Ascending aorta (tissue), 2 donors: ENCODE measurements at regions of chr2 and their contacts with region 1.

Region 1: DNA sequence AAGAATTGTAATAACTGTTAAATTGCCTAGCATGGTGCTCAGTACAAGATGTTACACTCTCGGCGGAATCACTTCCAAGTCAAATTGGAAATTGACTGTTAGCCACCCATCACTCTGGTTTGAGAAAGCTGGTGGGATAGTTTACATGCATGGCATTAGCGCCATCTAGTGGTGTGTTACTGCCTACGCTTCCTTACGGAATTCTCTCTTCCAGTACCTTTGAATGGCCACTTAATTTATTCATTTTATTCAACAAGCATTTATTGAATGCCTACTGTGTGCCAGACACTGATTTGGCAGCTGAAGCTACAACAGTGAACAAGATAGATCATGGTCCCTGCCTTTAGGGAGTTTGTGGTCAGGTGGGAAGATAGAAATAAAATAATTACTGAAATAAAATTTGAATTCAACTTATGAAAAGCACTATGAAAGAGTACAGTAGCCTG is 171.2 kb downstream of the TMEM247 start:
- DNase-seq: peak in 1 of 2 donors; percentile 84
- H3K4me3 ChIP-seq: no peak overlapping the region
- H3K27ac ChIP-seq: no peak overlapping the region
- H3K4me1 ChIP-seq: peaks cover 0 to 1% of the 10 kb centered on the region in 2 donors
- H3K27me3 ChIP-seq: no peaks in the 10 kb centered on the region
- CTCF ChIP-seq: peak; percentile 85 to 92 (median 92)

Region 2: GRCh38 chr2:46780801-46781445 is 130.3 kb after region 1 on chr2:
- intact Hi-C with region 1: loop called (anchors 5 kb)
- DNase-seq: no peak
- H3K4me3 ChIP-seq: peak overlapping the region in 1 of 2 donors; percentile 15
- H3K27ac ChIP-seq: peak overlapping the region; percentile 31 to 64
- H3K4me1 ChIP-seq: peaks cover 5 to 19% of the 10 kb centered on the region in 2 donors
- H3K27me3 ChIP-seq: no peaks in the 10 kb centered on the region
- CTCF ChIP-seq: no peak